Activated CD4-positive, alpha-beta T cell treated with anti-CD3 and anti-CD28 coated beads, Interleukin-2, amount 10 ng/mL, durations not matched to agents 7 days and 5 days (primary cell): ENCODE measurements at regions of chr6 and their contacts with region 1.

Region 1: GRCh38 chr6:27374824-27375612 is 13.5 kb upstream of the ZNF391 start:
- DNase-seq: peak; percentile 70
- H3K4me3 Mint-ChIP-seq: peak overlapping the region; percentile 76
- H3K27ac Mint-ChIP-seq: peak overlapping the region; percentile 82
- H3K4me1 Mint-ChIP-seq: peaks cover 21% of the 10 kb centered on the region
- H3K27me3 Mint-ChIP-seq: peaks cover 6% of the 10 kb centered on the region

Region 2: DNA sequence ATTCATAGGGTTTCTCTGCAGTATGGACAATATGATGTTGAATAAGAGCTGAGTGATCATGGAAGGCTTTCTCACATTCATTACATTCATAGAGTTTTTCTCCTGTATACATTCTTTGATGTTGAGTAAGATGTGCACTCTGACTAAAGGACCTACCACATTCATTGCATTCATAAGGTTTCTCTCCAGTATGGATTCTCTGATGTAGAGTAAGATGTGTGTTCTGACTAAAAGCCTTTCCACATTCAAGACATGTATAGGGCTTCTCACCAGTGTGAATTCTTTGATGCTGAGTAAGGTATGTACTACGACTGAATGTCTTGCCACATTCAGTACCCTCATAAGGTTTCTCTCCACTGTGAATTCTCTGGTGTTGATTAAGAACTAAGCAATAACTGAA is 15.8 kb before region 1 on chr6:
- CTCF ChIA-PET with region 1: no interaction called
- POLR2A ChIA-PET with region 1: interaction called, 12 read pairs
- DNase-seq: no peak
- H3K4me3 Mint-ChIP-seq: no peak overlapping the region
- H3K27ac Mint-ChIP-seq: no peak overlapping the region
- H3K4me1 Mint-ChIP-seq: no peaks in the 10 kb centered on the region
- H3K27me3 Mint-ChIP-seq: peaks cover 2% of the 10 kb centered on the region

Region 3: DNA sequence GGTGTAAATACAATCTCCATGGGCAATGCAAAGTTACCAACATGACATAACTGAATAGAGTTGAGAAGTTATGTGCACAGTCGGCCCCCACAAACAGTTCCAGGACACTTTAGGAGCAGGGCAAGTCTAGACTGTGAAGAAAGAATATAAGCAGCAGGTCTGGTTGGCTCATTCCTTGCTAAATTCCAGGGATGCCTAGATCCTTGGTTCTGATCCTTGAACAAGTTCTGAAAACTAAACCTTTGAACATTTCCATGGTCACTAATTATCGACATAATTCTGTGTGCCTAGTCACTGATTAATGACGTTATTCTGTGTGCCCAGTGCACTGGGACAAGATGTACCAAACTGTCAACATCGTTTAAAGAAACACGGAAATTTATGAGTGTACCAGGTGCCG is 85.7 kb after region 1 on chr6:
- CTCF ChIA-PET with region 1: no interaction called
- POLR2A ChIA-PET with region 1: no interaction called
- DNase-seq: no peak
- H3K4me3 Mint-ChIP-seq: no peak overlapping the region
- H3K27ac Mint-ChIP-seq: no peak overlapping the region
- H3K4me1 Mint-ChIP-seq: peaks cover 4% of the 10 kb centered on the region
- H3K27me3 Mint-ChIP-seq: no peaks in the 10 kb centered on the region

Region 4: GRCh38 chr6:27517928-27518787 is 143.1 kb after region 1 on chr6:
- CTCF ChIA-PET with region 1: no interaction called
- POLR2A ChIA-PET with region 1: no interaction called
- DNase-seq: no peak
- H3K4me3 Mint-ChIP-seq: peak overlapping the region; percentile 73
- H3K27ac Mint-ChIP-seq: peak overlapping the region; percentile 77
- H3K4me1 Mint-ChIP-seq: peaks cover 20% of the 10 kb centered on the region
- H3K27me3 Mint-ChIP-seq: peaks cover 38% of the 10 kb centered on the region

Region 5: GRCh38 chr6:27795697-27796494 is 420.9 kb after region 1 on chr6:
- CTCF ChIA-PET with region 1: interaction called, 11 read pairs
- POLR2A ChIA-PET with region 1: no interaction called
- DNase-seq: peak; percentile 82
- H3K4me3 Mint-ChIP-seq: no peak overlapping the region
- H3K27ac Mint-ChIP-seq: no peak overlapping the region
- H3K4me1 Mint-ChIP-seq: peaks cover 47% of the 10 kb centered on the region
- H3K27me3 Mint-ChIP-seq: peaks cover 18% of the 10 kb centered on the region